Cardiac septum (tissue), 1 donor: ENCODE measurements at regions of chr7 and their contacts with region 1.

Region 1: GRCh38 chr7:115217373-115217772 is 295.5 kb downstream of the MDFIC start:
- DNase-seq: no peak

Region 2: GRCh38 chr7:114988755-114989375 is 228.5 kb before region 1 on chr7:
- intact Hi-C with region 1: loop called (anchors 10 kb)
- DNase-seq: peak; percentile 81

Region 3: DNA sequence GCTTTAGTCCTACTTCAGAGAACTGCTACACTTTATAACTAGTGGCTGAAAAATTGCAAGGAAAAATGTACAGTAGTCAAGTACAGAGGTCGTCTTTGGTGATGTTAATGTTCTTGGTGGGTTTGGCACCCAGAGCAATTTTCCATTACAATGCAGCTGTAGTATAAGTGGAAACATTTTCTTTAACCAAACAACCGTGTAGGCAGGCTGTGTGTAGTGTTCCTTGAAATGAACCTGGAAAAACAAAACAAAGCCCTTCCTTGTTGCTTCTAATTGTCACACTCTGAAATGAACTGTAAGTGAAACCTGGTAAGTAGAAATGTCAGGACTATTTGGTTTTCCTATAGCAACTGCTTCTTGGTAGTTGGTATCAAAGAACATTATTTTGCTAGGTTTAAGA is 38.5 kb before region 1 on chr7:
- intact Hi-C with region 1: no loop called
- DNase-seq: no peak